Activated T-helper 1 cell treated with anti-CD3 and anti-CD28 coated beads, Interleukin-12 subunit alpha, Interleukin-12 subunit beta, Interleukin-2, Interleukin-4 antibody, amounts not matched to agents 30 ng/mL and 10 ng/mL and 1 ng/mL, durations not matched to agents 14 hours and 24 hours and 36 hours (primary cell): ENCODE measurements at regions of chr4 and their contacts with region 1.

Region 1: GRCh38 chr4:70687821-70688794 is at the start of gene UTP3:
- DNase-seq: peak; percentile 88
- H3K4me3 Mint-ChIP-seq: peak within 1 kb of the TSS; percentile 99
- H3K27ac Mint-ChIP-seq: peak within 1 kb of the TSS; percentile 98
- H3K4me1 Mint-ChIP-seq: peaks cover 33% of the 10 kb centered on the region
- H3K27me3 Mint-ChIP-seq: peaks cover 2% of the 10 kb centered on the region
- total RNA-seq, gene UTP3: 51.5 and 52.8 TPM in 2 replicates

Region 2: DNA sequence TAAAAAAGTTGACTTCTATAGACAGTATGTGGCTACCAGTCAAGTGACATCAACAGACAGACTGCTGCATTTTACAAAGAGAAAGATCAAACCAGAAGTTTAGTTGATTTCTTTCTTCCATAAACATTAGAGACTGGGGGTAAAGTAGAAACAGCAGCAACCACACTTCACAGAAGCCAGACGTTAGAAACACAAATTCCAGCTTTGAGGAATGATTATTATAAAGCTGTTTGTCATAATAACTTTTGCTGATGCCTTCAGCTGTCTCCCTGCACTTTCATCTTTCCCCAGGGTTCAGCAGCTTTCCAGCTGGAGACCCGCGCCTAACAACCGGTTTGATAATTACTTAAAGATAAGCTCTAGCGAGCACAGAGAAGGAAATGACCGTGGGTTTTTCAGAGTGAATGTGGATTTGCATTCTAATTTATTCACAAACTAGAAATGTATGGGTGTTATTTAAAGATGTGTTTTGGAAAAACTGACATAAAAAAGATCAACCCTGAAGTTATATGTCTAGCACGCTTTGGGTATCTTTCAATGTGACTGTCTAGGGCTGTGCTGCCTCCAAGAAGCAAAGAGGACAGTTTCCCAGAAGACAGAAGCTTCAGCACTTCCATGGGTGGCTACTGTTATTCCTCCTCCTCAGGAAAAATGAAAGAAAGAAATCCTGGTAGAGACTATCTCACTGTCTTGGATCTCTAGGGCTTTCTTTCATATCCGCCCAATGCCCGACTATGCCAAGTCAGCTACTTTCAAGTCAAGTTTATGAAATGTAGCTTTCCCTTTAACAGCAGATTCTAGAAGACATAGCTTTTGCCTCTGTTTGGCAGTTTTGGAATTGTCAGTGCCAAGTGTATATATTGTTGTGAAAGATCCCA is 74.6 kb before region 1 on chr4:
- intact Hi-C with region 1: no loop called
- DNase-seq: no peak
- H3K4me3 Mint-ChIP-seq: no peak overlapping the region
- H3K27ac Mint-ChIP-seq: no peak overlapping the region
- H3K4me1 Mint-ChIP-seq: peaks cover 12% of the 10 kb centered on the region
- H3K27me3 Mint-ChIP-seq: peaks cover 28% of the 10 kb centered on the region

Region 3: GRCh38 chr4:70624226-70624793 is 63.8 kb before region 1 on chr4:
- intact Hi-C with region 1: loop called (anchors 2 kb)
- DNase-seq: no peak
- H3K4me3 Mint-ChIP-seq: no peak overlapping the region
- H3K27ac Mint-ChIP-seq: no peak overlapping the region
- H3K4me1 Mint-ChIP-seq: peaks cover 7% of the 10 kb centered on the region
- H3K27me3 Mint-ChIP-seq: no peaks in the 10 kb centered on the region

Region 4: GRCh38 chr4:70704331-70705145 is 16.4 kb after region 1 on chr4:
- intact Hi-C with region 1: loop called (anchors 1 kb)
- DNase-seq: peak; percentile 38
- H3K4me3 Mint-ChIP-seq: peak overlapping the region; percentile 76
- H3K27ac Mint-ChIP-seq: peak overlapping the region; percentile 83
- H3K4me1 Mint-ChIP-seq: peaks cover 24% of the 10 kb centered on the region
- H3K27me3 Mint-ChIP-seq: peaks cover 3% of the 10 kb centered on the region

Region 5: GRCh38 chr4:70801265-70801809 is 113.2 kb after region 1 on chr4:
- intact Hi-C with region 1: loop called (anchors 1 kb)
- DNase-seq: peak; percentile 1
- H3K4me3 Mint-ChIP-seq: no peak overlapping the region
- H3K27ac Mint-ChIP-seq: peak overlapping the region; percentile 33
- H3K4me1 Mint-ChIP-seq: peaks cover 21% of the 10 kb centered on the region
- H3K27me3 Mint-ChIP-seq: no peaks in the 10 kb centered on the region

Region 6: DNA sequence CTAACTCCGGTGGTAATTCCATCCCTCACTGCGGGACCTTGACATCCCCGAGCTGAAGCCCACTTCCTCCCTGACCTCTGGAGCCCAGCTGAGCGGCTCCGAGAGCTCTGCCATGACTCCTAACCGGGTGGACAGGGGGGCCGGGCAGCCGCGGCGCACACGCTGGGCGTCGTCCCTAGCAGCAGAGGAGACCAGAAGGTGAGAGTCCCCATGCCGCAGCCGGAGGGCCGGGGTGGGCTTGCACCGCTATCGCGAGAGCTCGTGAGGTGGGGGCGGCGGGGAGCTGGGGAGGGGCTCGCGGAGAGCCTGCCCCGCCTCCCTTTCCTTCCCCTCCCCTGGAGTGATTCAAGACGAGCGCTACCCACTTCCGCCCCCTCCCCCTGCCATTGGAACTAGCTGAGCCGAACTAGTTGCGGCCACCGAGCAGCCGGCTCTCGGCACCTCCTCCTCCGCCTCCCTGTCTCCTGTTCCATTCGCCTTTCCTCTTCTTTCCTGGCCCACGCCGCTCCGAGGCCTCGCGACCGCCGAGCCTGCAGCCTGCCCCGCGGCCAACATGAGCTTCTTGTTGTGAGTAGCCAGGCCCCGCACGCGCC is 214.0 kb after region 1 on chr4 and contains the start of gene MOB1B:
- intact Hi-C with region 1: loop called (anchors 1 kb)
- DNase-seq: peak; percentile 81
- H3K4me3 Mint-ChIP-seq: peak within 1 kb of the TSS; percentile 98
- H3K27ac Mint-ChIP-seq: peak within 1 kb of the TSS; percentile 93
- H3K4me1 Mint-ChIP-seq: peaks cover 25% of the 10 kb centered on the region
- H3K27me3 Mint-ChIP-seq: no peaks in the 10 kb centered on the region
- total RNA-seq, gene MOB1B: 22.1 and 23.1 TPM in 2 replicates

Region 7: DNA sequence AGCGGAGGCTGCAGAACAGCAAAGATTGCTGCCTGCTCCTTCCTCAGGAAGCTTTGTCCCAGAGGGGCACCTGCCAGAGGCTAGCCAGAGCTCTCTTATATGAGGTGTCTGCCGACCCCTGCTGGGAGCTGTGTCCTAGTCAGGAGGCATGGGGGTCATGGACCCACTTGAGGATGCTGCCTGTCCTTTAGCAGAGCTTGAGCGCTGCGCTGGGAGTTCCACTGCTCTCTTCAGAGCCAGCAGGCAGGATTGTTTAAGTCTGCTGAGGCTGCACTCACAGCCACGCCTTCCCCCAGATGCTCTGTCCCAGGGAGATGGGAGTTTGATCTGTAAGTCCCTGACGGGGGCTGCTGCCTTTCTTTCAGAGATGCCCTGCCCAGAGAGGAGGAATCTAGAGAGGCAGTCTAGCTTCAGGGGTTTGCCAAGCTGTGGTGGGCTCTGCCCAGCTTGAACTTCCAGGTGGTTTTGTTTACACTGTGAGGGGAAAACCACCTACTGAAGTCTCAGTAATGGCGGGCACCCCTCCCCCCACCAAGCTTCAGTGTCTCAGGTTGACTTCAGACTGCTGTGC is 316.3 kb after region 1 on chr4:
- intact Hi-C with region 1: loop called (anchors 2 kb)
- DNase-seq: peak; percentile 54
- H3K4me3 Mint-ChIP-seq: peak overlapping the region; percentile 76
- H3K27ac Mint-ChIP-seq: peak overlapping the region; percentile 81
- H3K4me1 Mint-ChIP-seq: peaks cover 90% of the 10 kb centered on the region
- H3K27me3 Mint-ChIP-seq: no peaks in the 10 kb centered on the region